HepG2 (cell line): ENCODE measurements at regions of chr2 and their contacts with region 1.

Region 1: DNA sequence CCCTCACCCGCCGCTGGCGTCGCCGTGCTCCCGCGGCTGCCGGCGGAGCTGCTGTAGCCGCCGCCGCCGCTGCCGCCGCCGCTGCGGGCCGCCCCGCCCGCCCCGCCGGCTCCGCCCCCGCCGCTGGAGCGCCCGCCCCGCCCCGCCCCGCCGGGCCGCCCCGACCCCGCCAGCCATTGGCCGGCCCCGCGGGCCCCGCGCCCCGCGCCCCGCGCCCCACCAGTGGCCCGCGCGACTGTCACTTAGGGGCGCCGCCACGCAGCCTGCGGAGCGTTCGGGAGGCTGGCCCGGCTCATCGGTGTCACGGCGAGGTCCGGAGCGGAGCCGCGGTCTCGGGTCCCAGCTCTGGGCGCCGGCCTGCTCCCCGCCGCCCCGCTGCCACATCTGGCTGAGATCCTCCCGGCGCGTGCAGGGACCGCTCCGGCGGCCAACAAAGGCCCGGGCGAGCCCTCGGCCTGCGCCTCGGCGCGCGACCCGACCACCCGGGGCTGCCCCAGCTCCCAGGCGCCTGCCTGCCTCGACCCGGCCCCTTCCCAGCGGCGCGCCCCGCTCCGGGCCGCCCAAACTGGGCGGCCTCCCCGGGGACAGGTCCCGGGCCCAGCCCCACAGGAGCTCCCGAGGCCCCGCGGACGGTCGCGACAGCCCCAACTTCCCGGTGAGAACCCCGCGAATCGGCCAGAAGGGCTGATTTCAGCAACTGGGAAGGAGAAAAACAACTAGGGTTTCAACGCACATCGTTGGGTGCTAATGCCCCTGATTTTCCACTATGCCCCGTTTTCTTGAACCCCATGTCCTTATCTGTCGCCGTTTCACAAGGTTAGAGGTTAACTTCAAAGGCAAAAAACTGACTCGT is at the start of gene MGAT4A:
- DNase-seq: peak; percentile 69
- ATAC-seq: peak; percentile 91
- H3K4me3 ChIP-seq: peak within 1 kb of the TSS; percentile 77 to 97 (median 96)
- H3K27ac ChIP-seq: peak within 1 kb of the TSS; percentile 91
- H3K4me1 ChIP-seq: peaks cover 79% of the 10 kb centered on the region
- H3K27me3 ChIP-seq: no peaks in the 10 kb centered on the region; a peak in 1 of 5 replicates
- CTCF ChIP-seq: no peak
- EP300 ChIP-seq: peak in 1 of 2 experiments; percentile 35; a peak in 1 of 4 replicates
- POLR2A ChIP-seq: peak; percentile 79 to 96
- RAD21 ChIP-seq: peak; percentile 69; the same call in 1 of the 2 replicates
- total RNA-seq, gene MGAT4A: 90.9 and 97.6 TPM in 2 replicates

Region 2: DNA sequence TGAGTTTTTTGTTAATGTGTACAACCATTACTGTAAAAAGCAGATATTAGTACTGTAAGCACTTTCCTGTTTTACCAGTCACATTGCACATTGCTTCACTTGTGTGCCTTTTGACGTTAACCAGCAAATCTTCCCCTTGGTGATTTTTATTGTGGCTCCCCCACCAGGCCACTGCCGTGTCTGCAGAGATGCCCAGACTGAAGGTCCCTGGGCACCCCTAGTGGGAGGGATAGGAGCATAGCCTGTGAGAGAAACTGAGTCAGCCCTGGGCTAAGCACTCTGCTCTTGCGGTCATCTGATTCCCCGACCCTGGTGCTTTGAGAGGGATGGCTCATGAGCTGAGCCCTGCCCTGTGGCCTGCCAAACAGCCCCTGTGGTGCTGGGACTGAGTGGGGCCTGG is 213.2 kb before region 1 on chr2:
- CTCF ChIA-PET with region 1: no interaction called
- POLR2A ChIA-PET with region 1: no interaction called
- in situ Hi-C with region 1: no loop called
- intact Hi-C with region 1: no loop called
- DNase-seq: peak; percentile 55
- ATAC-seq: peak; percentile 85
- H3K4me3 ChIP-seq: no peak overlapping the region
- H3K27ac ChIP-seq: no peak overlapping the region
- H3K4me1 ChIP-seq: no peaks in the 10 kb centered on the region
- H3K27me3 ChIP-seq: no peaks in the 10 kb centered on the region
- CTCF ChIP-seq: peak; percentile 58
- EP300 ChIP-seq: no peak
- POLR2A ChIP-seq: no peak
- RAD21 ChIP-seq: peak; percentile 68; the same call in 1 of the 2 replicates

Region 3: DNA sequence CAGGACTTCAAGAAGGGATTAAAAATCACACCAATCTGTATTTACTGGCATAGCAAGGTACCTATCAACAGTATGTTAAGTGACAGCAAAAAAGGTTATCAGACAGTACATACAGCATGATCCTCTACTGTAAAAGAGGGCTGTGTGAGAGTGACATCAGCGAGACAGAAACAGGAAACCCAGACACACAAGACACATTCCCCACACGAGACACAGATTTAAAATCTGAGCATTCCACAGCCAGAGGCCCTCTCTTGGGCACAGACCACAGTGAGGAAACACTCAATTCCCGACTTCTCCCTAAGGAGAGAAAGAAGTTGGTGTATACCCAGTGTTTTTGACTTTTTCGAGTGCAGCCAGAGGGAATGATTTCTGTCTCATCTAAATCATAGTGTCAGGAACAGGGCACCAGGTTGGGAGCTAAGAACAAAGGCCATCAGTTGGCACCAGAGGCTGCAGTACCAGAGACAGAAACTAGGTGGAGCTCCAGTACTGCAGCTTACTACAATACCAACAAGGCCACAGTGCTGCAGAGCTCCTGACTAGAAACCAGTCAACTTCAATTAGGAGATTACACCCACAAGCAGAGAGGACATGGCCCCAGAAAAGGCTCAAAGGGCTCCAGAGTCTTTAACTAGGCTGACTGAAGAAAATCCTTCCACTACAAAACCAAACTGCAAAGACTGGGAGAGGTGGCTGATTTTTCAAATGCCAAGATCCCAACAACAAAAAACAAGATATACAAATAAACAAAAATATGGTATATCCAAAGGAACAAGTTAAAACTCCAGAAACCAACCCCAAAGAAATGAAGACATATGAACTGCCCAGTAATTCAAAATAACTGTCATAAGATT is 81.9 kb before region 1 on chr2:
- CTCF ChIA-PET with region 1: interaction called, 3 read pairs
- POLR2A ChIA-PET with region 1: interaction called, 5 read pairs
- in situ Hi-C with region 1: no loop called
- intact Hi-C with region 1: loop called (anchors 1 kb)
- DNase-seq: peak; percentile 83
- ATAC-seq: peak; percentile 99
- H3K4me3 ChIP-seq: no peak overlapping the region
- H3K27ac ChIP-seq: no peak overlapping the region
- H3K4me1 ChIP-seq: peaks cover 10% of the 10 kb centered on the region; the same call in 1 of the 2 replicates
- H3K27me3 ChIP-seq: no peaks in the 10 kb centered on the region
- CTCF ChIP-seq: peak; percentile 96
- EP300 ChIP-seq: no peak
- POLR2A ChIP-seq: no peak
- RAD21 ChIP-seq: peak; percentile 98

Region 4: DNA sequence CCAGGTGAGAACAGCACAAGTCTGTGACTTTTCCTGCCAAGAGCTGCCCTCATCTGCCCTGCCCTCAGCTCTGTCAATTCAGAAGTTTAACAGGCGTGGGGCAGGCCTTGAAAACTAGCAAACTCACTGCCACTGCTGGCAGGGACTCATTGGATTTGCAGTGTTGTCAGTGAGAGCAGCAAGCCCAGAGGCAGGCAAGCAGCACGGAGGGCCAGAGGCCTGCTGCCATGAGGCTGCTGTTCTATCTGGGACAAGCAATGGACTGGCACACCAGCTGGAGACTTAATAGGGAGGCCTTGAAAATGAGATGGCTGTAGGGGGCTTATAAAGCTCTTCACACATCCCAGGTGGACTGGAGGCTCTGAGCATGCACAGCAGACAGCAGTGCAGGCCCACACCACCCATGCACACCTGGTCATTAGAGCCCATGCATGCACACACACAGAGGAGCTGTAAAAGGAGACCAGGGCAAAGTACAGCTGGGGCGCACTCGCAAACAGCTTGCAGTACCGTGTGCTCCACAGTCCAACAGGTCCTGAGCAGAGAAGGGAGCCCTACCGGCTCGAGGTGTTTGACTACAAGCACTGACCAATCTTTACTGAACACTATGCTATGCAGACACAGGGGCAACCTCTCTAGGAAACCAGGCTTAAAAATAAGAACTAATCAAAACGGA is 29.0 kb before region 1 on chr2:
- CTCF ChIA-PET with region 1: no interaction called
- POLR2A ChIA-PET with region 1: interaction called, 31 read pairs
- in situ Hi-C with region 1: no loop called
- intact Hi-C with region 1: loop called (anchors 1 kb)
- DNase-seq: peak; percentile 91
- ATAC-seq: peak; percentile 99
- H3K4me3 ChIP-seq: peak overlapping the region; percentile 21 to 55 (median 29)
- H3K27ac ChIP-seq: peak overlapping the region; percentile 88
- H3K4me1 ChIP-seq: peaks cover 63% of the 10 kb centered on the region
- H3K27me3 ChIP-seq: no peaks in the 10 kb centered on the region
- CTCF ChIP-seq: peak; percentile 41
- EP300 ChIP-seq: peak in 1 of 2 experiments; percentile 73; a peak in 2 of 4 replicates
- POLR2A ChIP-seq: peak; percentile 74 to 82
- RAD21 ChIP-seq: peak; percentile 28; the same call in 1 of the 2 replicates

Region 5: GRCh38 chr2:98771721-98772524 is 40.7 kb after region 1 on chr2:
- CTCF ChIA-PET with region 1: no interaction called
- POLR2A ChIA-PET with region 1: interaction called, 12 read pairs
- in situ Hi-C with region 1: no loop called
- intact Hi-C with region 1: loop called (anchors 5 kb)
- DNase-seq: no peak
- ATAC-seq: no peak
- H3K4me3 ChIP-seq: no peak overlapping the region
- H3K27ac ChIP-seq: no peak overlapping the region
- H3K4me1 ChIP-seq: peaks cover 57% of the 10 kb centered on the region
- H3K27me3 ChIP-seq: no peaks in the 10 kb centered on the region
- CTCF ChIP-seq: no peak
- EP300 ChIP-seq: no peak
- POLR2A ChIP-seq: no peak
- RAD21 ChIP-seq: no peak

Region 6: GRCh38 chr2:98795891-98796676 is 64.8 kb after region 1 on chr2:
- CTCF ChIA-PET with region 1: no interaction called
- POLR2A ChIA-PET with region 1: interaction called, 84 read pairs
- in situ Hi-C with region 1: no loop called
- intact Hi-C with region 1: loop called (anchors 1 kb)
- DNase-seq: peak; percentile 100
- ATAC-seq: peak; percentile 89
- H3K4me3 ChIP-seq: peak overlapping the region; percentile 4 to 53 (median 28); a peak in 4 of 6 replicates
- H3K27ac ChIP-seq: peak overlapping the region; percentile 94
- H3K4me1 ChIP-seq: peaks cover 80% of the 10 kb centered on the region
- H3K27me3 ChIP-seq: no peaks in the 10 kb centered on the region
- CTCF ChIP-seq: peak; percentile 69
- EP300 ChIP-seq: peak; percentile 96 to 99
- POLR2A ChIP-seq: peak; percentile 72 to 79
- RAD21 ChIP-seq: peak; percentile 76

Region 7: GRCh38 chr2:98811766-98812165 is 80.5 kb after region 1 on chr2:
- CTCF ChIA-PET with region 1: no interaction called
- POLR2A ChIA-PET with region 1: no interaction called
- in situ Hi-C with region 1: no loop called
- intact Hi-C with region 1: no loop called
- DNase-seq: no peak
- ATAC-seq: no peak
- H3K4me3 ChIP-seq: no peak overlapping the region
- H3K27ac ChIP-seq: no peak overlapping the region
- H3K4me1 ChIP-seq: peaks cover 20% of the 10 kb centered on the region
- H3K27me3 ChIP-seq: no peaks in the 10 kb centered on the region
- CTCF ChIP-seq: no peak
- EP300 ChIP-seq: no peak
- POLR2A ChIP-seq: no peak
- RAD21 ChIP-seq: no peak

Region 8: GRCh38 chr2:98828793-98829371 is 97.6 kb after region 1 on chr2:
- CTCF ChIA-PET with region 1: no interaction called
- POLR2A ChIA-PET with region 1: interaction called, 12 read pairs
- in situ Hi-C with region 1: no loop called
- intact Hi-C with region 1: no loop called
- DNase-seq: peak; percentile 43
- ATAC-seq: peak; percentile 42
- H3K4me3 ChIP-seq: no peak overlapping the region
- H3K27ac ChIP-seq: peak overlapping the region; percentile 1
- H3K4me1 ChIP-seq: peaks cover 74% of the 10 kb centered on the region
- H3K27me3 ChIP-seq: no peaks in the 10 kb centered on the region; a peak in 1 of 5 replicates
- CTCF ChIP-seq: no peak
- EP300 ChIP-seq: peak in 1 of 2 experiments; percentile 84; a peak in 1 of 4 replicates
- POLR2A ChIP-seq: no peak
- RAD21 ChIP-seq: no peak

Region 9: DNA sequence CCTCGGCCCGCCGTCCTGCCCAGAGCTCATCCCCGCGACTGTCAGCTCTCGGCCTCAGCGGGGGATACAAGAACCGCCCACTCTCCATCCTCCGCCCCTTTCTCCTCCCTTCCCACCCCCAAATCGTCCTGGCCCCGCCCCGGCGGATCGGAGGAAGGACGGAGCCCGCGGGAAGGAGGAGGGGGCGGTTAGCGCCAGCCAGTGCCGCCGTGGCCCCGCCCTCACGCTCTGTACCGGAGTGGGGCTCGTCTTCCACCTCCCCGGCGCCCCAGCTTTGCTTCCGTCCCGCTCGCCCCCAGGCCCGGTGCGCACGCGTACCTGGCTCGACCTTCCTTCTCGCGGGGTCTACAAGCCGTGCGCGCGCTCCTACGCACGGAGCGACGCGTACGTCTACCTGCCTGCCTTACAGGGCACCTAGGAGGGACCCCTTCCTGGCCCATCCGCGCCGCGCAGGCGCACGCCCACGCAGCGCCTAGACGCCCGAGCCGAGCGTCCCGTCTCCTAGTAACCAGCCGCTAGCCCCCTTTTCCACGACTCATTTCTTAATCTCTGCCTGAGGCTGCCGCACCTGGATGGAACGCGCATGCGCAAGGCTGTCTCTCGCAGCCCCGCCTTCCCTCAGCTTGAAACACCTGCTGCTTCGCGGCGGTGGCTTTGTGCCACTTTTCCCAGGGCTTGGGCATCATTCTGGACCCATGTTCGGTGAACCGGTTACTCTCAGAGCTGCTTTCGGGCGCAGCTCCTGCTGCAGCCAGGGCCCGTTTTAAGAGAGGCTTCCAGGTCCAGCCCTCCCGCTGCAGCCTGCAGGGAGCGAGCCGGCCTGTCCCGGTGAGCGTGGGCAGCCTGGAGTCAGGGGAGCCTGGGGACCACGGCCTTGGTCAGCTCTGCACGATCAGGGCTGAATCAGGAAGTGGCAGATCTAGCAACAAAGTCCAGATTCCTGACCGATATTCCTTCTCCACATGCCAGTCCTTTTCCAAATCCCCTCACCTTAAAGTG is 410.1 kb after region 1 on chr2 and contains the start of gene C2orf15:
- CTCF ChIA-PET with region 1: no interaction called
- POLR2A ChIA-PET with region 1: interaction called, 10 read pairs
- in situ Hi-C with region 1: no loop called
- intact Hi-C with region 1: no loop called
- DNase-seq: peak; percentile 94
- ATAC-seq: peak; percentile 93
- H3K4me3 ChIP-seq: peak within 1 kb of the TSS; percentile 75 to 92 (median 85)
- H3K27ac ChIP-seq: peak within 1 kb of the TSS; percentile 74
- H3K4me1 ChIP-seq: peaks cover 28% of the 10 kb centered on the region
- H3K27me3 ChIP-seq: no peaks in the 10 kb centered on the region
- CTCF ChIP-seq: no peak; the same call in 1 of the 2 replicates
- EP300 ChIP-seq: 0 out of 4 replicates have a peak, but pooled peaks of 1 of the 2 experiments have one; percentile 1
- POLR2A ChIP-seq: peak; percentile 89 to 99
- RAD21 ChIP-seq: no peak
- total RNA-seq, gene C2orf15: 8.3 and 12.2 TPM in 2 replicates